ENCODE measurements at regions of chr16 and their contacts with region 1.

Region 1: DNA sequence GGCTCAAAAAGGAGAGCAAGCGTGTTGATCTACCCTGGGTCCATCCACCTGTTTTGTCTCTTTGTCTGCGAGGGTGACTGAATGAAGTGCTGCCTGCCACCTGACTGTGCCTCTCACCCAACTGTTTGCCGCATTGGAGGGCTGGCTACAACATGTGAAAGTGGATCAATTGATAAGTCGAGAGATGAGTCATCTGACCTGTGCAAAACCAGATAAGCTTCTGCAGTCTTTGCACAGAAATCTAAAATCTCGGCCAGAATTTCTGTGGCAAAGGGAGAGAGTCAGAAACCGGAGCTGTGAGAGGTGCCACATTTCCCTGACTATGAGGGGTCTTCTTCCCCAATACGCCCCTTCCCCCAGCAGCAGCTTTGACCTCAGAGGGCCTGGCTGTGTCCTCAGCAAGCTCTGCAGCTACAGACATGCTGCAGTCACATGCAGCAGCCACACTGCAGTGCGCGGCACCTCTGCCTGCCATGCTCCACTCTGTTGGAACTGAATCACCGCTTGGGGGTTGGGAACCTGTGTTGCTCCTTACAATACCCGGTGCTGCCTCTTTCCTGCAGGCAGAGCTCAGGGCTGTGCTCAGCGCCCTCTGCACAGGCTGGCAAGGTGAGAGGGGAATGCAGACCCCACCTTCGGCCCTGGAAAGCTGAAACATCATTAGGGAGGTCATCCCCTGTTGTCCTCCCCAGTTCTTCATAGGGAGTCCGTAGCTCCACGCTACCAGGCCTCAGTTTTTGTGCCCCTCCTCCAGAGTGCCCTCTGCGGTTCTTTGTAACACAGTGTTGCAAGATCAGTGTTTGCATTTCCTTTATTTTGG is 16.2 kb upstream of the HAS3 start:
- DNase-seq: no peak
- ATAC-seq: peak in 6 of 8 donors; percentile 39 to 61 (median 49)
- H3K4me3 ChIP-seq: no peak overlapping the region
- H3K27ac ChIP-seq: peak overlapping the region in 5 of 10 donors; percentile 14 to 59 (median 39)
- H3K4me1 ChIP-seq: peaks cover 0 to 33% (median 15%) of the 10 kb centered on the region in 9 donors
- H3K27me3 ChIP-seq: no peaks in the 10 kb centered on the region
- CTCF ChIP-seq: no peak

Region 2: DNA sequence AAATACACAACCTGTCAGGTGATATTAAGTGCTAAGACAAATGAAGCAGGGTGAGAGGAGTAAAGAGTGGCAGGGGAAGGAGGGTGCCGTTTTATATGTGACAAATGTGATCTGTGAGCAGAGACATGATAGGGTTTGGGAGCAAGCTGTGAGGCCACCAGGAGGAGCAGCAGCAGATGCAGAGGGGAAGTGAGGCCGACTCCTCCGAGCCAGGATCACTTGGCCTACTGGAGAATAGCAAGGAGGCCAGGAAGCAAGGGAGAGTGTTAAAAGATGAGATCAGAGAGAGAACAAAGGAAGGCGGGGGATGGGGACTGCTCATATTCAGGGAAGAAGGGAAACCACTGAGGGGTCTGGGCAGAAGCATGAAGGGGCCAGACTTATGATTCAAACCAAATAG is 116.6 kb before region 1 on chr16:
- intact Hi-C with region 1: loop called in 1 of 10 experiments (anchors 10 kb)
- DNase-seq: peak in 1 of 2 donors; percentile 8
- ATAC-seq: peak in 4 of 8 donors; percentile 29 to 41 (median 33)
- H3K4me3 ChIP-seq: no peak overlapping the region
- H3K27ac ChIP-seq: no peak overlapping the region
- H3K4me1 ChIP-seq: peaks cover 0 to 5% (median 0%) of the 10 kb centered on the region in 9 donors
- H3K27me3 ChIP-seq: no peaks in the 10 kb centered on the region
- CTCF ChIP-seq: peak in 4 of 9 donors; percentile 29 to 41 (median 34)